MCF 10A (cell line): ENCODE measurements at regions of chr6 and their contacts with region 1.

Region 1: DNA sequence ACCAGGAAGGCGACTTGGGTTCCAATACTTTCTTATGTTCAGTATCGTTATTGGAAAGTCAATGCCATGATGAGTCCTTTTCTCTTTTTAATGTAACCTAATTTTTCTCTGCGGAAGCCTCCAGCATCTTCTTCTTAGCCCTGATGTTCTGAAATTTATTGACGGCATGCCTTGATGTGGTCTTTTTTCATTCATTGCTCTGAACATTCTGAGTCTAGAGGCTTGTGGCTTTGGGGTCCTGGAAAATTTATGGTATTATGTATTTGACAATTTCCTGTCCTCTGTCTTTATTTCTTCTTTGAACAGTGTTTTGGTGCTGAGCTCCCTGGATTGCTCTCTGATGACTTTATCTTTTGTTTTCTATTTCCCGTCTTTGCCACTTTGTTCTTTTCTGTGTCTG is 28.7 kb upstream of the MAS1 start:
- DNase-seq: no peak
- H3K4me3 Mint-ChIP-seq: no peak overlapping the region
- H3K27ac Mint-ChIP-seq: no peak overlapping the region
- H3K4me1 Mint-ChIP-seq: no peaks in the 10 kb centered on the region
- H3K27me3 Mint-ChIP-seq: no peaks in the 10 kb centered on the region
- CTCF ChIP-seq: no peak

Region 2: DNA sequence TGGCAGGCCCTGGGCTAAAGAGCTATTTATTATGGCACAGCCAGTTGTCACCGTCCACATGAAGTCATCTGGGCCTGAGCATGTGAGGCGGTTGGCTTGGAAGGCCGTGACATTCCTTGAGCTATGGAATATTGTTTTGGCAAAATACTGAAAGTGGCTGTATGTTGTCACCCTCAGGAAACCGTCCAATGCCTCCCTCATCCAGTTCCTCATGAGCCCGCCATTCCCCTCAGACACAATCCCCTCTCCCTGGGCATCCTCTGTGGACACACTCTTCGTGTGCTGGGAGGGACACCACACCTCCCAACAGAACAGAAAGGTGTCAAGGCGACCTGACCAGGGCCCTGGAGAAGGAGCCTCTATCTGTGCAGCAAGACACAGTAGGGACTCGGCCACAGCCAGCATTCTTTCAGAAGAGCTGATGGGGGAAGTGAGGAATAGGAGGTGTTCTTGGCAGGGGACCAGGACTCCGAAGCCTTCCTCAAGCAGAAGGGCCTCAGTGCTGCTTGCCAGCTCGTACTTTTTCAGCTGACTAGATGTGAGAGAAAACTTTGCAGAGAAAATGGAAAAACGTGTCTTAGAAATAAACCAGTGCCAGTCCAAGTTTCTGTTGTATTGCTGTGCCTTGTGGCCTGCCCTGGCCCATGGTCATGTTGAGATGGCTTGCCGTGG is 289.5 kb before region 1 on chr6:
- CTCF ChIA-PET with region 1: no interaction called
- POLR2A ChIA-PET with region 1: no interaction called
- intact Hi-C with region 1: no loop called
- DNase-seq: no peak
- H3K4me3 Mint-ChIP-seq: no peak overlapping the region
- H3K27ac Mint-ChIP-seq: no peak overlapping the region
- H3K4me1 Mint-ChIP-seq: no peaks in the 10 kb centered on the region
- H3K27me3 Mint-ChIP-seq: no peaks in the 10 kb centered on the region
- CTCF ChIP-seq: no peak

Region 3: DNA sequence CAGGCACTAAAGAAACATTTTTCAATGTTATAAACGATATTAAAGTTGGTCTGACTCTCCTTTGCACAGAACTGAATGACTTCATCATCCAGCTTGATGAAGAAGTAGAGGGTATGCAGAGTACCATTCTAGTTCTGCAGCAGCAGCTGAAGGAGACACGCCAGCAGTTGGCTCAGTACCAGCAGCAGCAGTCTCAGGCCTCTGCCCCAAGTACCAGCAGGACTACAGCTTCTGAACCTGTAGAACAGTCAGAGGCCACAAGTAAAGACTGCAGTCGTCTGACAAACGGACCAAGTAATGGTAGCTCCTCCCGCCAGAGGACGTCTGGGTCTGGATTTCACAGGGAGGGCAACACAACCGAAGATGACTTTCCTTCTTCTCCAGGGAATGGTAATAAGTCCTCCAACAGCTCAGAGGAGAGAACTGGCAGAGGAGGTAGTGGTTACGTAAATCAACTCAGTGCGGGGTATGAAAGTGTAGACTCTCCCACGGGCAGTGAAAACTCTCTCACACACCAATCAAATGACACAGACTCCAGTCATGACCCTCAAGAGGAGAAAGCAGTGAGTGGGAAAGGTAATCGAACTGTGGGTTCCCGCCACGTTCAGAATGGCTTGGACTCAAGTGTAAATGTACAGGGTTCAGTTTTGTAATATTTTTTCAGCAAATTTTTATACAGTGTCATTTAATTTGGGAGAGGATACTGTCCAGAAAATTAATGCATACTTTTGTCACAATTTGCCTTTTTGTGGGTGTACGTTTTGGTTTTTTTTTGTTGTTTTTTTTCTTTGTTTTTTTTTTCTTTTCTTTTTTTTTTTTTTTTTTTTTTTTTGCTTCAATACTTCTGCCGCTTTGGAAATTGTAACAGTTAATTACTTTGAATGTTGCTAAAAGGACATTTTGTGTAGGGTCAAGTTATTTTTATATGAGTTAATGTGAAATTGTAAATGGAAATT is 106.9 kb before region 1 on chr6:
- CTCF ChIA-PET with region 1: no interaction called
- POLR2A ChIA-PET with region 1: no interaction called
- intact Hi-C with region 1: no loop called
- DNase-seq: no peak
- H3K4me3 Mint-ChIP-seq: no peak overlapping the region
- H3K27ac Mint-ChIP-seq: no peak overlapping the region
- H3K4me1 Mint-ChIP-seq: peaks cover 12% of the 10 kb centered on the region
- H3K27me3 Mint-ChIP-seq: no peaks in the 10 kb centered on the region
- CTCF ChIP-seq: no peak

Region 4: DNA sequence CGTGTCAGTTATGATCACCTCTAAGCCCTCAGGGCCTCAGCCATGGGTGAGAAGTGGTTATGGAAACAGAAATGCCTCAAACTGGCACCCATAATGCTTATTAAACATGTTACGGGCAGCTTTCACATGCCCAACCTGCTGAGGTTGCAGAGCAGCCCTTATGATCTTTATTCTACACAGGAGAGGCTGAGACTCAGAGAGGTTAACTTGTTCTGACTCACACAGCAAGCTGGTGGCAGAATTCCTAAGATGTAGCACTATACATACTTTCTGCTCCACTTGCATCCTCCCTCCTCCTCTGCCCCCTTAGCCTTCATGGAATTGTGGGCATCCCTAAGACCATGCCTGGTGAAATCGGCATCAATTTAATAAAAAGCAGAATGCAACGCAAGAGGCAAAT is 72.1 kb after region 1 on chr6:
- CTCF ChIA-PET with region 1: interaction called, 153 read pairs
- POLR2A ChIA-PET with region 1: interaction called, 3 read pairs
- intact Hi-C with region 1: no loop called
- DNase-seq: no peak
- H3K4me3 Mint-ChIP-seq: no peak overlapping the region
- H3K27ac Mint-ChIP-seq: no peak overlapping the region
- H3K4me1 Mint-ChIP-seq: peaks cover 11% of the 10 kb centered on the region
- H3K27me3 Mint-ChIP-seq: no peaks in the 10 kb centered on the region
- CTCF ChIP-seq: no peak

Region 5: GRCh38 chr6:160041608-160042007 is 179.5 kb after region 1 on chr6:
- CTCF ChIA-PET with region 1: interaction called, 5 read pairs
- POLR2A ChIA-PET with region 1: interaction called, 5 read pairs
- intact Hi-C with region 1: loop called (anchors 1 kb)
- DNase-seq: peak; percentile 97
- H3K4me3 Mint-ChIP-seq: peak overlapping the region; percentile 77
- H3K27ac Mint-ChIP-seq: peak overlapping the region; percentile 66
- H3K4me1 Mint-ChIP-seq: peaks cover 58% of the 10 kb centered on the region
- H3K27me3 Mint-ChIP-seq: no peaks in the 10 kb centered on the region
- CTCF ChIP-seq: peak; percentile 34

Region 6: DNA sequence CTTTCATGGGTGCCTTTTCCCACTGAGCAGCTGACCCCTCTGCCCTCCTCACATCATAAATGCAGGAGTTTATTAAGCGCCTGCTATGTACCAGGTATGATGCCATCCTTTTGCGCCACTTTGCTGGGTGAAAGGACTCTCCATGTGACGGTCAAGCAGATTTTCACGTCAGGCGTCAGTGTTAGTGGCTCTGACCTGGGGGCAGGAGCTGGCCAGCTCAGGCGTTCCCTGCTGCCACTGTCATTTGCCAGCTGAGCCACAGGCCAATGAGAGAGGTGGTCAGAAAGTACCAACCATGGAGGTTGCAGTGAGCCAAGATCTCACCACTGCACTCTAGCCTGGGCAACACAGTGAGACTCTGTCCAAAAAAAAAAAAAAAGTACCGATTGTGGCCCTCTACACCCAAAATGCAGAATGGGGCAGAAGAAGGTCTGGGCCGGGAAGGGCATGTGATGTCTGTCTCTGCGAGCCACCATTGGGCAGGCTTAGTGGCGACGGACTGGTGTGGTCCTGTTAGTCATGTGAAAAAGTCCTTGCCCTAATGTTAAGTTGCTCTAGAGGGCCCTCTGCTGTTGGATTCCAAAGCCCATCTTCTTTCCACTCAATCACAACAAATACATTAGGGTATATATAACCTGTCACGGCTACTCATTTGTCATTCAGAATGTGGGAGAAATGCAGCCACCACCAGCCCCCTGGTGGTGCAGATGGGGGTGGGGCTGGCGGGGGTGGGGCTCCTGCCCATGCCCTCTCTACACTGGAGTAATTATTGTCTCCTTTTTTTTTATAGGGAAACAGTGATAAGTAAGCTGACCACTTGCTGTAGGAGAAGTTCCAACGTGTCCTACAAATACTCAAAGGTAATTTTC is 241.1 kb after region 1 on chr6:
- CTCF ChIA-PET with region 1: no interaction called
- POLR2A ChIA-PET with region 1: no interaction called
- intact Hi-C with region 1: loop called (anchors 1 kb)
- DNase-seq: peak; percentile 48
- H3K4me3 Mint-ChIP-seq: no peak overlapping the region
- H3K27ac Mint-ChIP-seq: no peak overlapping the region
- H3K4me1 Mint-ChIP-seq: no peaks in the 10 kb centered on the region
- H3K27me3 Mint-ChIP-seq: no peaks in the 10 kb centered on the region
- CTCF ChIP-seq: peak; percentile 28

Region 7: DNA sequence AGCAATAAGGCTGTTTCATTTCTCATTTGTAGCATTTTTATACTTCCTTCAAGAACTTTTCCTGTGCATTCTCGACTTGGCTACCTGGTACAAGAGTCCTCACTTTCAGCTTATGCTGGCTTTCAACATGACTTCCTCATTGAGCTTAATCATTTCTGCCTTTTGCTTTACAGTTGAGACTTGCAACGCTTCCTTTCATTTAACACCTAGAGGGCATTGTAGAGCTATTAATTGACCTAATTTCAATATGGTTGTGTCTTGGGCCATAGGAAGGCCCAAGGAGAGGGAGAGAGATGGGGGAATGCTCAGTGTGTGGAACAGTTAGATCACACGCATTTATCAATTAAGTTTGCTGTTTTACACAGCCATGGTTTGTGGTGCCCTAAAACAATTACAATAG is 359.3 kb after region 1 on chr6:
- CTCF ChIA-PET with region 1: interaction called, 3 read pairs
- POLR2A ChIA-PET with region 1: no interaction called
- intact Hi-C with region 1: loop called (anchors 5 kb)
- DNase-seq: peak; percentile 54
- H3K4me3 Mint-ChIP-seq: no peak overlapping the region
- H3K27ac Mint-ChIP-seq: no peak overlapping the region
- H3K4me1 Mint-ChIP-seq: no peaks in the 10 kb centered on the region
- H3K27me3 Mint-ChIP-seq: peaks cover 17% of the 10 kb centered on the region
- CTCF ChIP-seq: peak; percentile 28